Activated CD4-positive, alpha-beta memory T cell treated with anti-CD3 and anti-CD28 coated beads, Interleukin-2, amount 10 ng/mL, durations not matched to agents 7 days and 5 days (primary cell): ENCODE measurements at regions of chr6 and their contacts with region 1.

Region 1: GRCh38 chr6:136792410-136793262 is at the start of gene MAP3K5:
- DNase-seq: peak; percentile 95
- H3K4me3 Mint-ChIP-seq: peak within 1 kb of the TSS; percentile 93
- H3K27ac Mint-ChIP-seq: peak within 1 kb of the TSS; percentile 91
- H3K4me1 Mint-ChIP-seq: peaks cover 31% of the 10 kb centered on the region
- H3K27me3 Mint-ChIP-seq: peaks cover 3% of the 10 kb centered on the region
- total RNA-seq, gene MAP3K5: 25.4 to 25.9 TPM

Region 2: DNA sequence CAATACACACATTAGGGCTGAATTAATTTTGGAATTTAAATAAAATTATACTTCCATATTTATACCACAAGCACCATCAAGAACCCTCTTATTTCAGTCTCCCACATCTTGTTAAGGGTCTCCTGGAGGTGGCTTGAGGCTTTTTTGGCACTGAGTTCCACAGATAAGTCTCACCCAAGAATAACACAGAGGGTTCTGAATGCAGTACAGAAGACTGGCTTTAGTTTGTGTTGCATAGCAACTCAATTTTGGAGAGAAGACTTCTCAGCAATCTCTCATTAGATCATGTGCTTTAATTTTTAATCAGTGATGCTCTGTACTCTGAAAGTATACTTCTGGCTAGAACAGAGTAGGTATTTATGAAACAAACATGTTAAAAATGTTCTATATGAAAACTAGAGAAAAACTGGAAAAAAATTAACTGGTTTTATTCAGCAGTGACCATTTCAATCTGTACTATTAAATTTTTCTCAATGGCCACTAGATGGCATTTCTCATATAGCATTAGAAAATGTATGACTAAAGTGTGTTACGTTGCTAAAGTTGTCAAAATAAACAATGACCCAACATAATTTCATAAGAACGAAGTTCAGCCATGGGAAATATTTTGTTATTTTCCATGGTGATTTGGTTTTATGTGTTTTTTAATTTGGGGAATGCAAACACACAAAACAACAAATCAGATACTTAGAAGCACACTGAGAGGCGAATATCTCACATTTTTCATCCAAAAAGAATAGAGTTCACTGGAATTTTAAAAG is 209.7 kb before region 1 on chr6:
- CTCF ChIA-PET with region 1: interaction called, 21 read pairs
- POLR2A ChIA-PET with region 1: interaction called, 7 read pairs
- DNase-seq: no peak
- H3K4me3 Mint-ChIP-seq: no peak overlapping the region
- H3K27ac Mint-ChIP-seq: no peak overlapping the region
- H3K4me1 Mint-ChIP-seq: peaks cover 6% of the 10 kb centered on the region
- H3K27me3 Mint-ChIP-seq: no peaks in the 10 kb centered on the region

Region 3: DNA sequence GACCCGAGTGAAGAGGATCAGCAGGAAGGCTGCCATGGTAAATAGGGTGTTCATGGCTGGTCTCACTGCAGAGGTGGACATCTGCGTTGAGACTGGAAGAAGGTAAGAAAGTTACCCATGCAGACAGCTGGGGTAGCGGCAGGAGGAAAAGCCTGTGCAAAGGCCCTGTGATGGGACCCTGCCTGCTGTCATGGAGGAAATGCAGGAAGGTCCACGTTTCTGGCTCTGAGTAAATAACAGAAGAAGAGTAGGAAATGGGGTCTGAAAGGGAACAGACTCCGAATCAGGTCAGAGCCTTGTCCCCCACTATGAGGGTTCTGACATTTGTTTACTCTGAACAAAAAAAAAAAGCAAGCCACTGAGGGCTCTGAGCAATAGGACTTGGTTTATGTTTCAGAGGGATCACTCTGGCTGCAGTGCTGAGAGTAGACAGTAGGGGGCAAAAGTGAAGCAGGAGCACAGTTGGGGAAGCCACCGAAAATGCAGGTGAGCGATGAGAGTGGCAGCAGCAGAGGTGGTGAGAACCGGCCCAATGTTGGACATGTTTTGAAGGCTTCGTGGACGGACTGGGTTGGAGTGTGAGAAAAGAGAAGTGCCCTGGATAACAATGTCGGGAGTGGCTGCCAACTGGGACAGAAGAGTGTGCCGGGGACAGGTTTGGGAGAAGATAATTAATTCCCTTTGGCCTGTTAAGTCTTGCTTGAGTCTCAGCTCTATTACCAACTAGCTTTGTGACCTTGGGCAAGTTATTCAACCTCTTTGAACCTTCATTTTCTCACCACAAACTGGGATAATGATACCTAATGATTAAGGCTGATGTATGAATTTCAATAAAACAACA is 184.5 kb before region 1 on chr6:
- CTCF ChIA-PET with region 1: interaction called, 28 read pairs
- POLR2A ChIA-PET with region 1: interaction called, 9 read pairs
- DNase-seq: peak; percentile 85
- H3K4me3 Mint-ChIP-seq: no peak overlapping the region
- H3K27ac Mint-ChIP-seq: no peak overlapping the region
- H3K4me1 Mint-ChIP-seq: peaks cover 30% of the 10 kb centered on the region
- H3K27me3 Mint-ChIP-seq: no peaks in the 10 kb centered on the region

Region 4: DNA sequence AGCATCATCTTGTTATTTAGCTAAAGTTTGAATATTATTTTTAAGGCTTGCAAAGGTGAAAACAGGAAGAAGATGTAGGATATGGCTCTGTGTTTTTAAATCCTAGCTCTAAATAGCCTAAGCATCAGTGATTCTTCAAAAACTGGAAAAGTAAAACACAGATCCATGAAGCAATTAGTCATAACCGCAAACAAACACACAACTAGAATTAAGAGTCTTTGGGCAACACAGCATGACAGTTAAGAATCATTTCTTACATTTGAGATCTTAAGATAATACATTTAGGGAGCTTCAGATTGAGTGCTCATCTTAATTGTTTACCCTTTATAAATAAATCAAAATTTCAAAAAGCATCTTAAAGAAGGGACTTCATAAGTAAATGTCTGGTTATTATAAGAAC is 126.6 kb before region 1 on chr6:
- CTCF ChIA-PET with region 1: interaction called, 21 read pairs
- POLR2A ChIA-PET with region 1: interaction called, 4 read pairs
- DNase-seq: no peak
- H3K4me3 Mint-ChIP-seq: no peak overlapping the region
- H3K27ac Mint-ChIP-seq: no peak overlapping the region
- H3K4me1 Mint-ChIP-seq: no peaks in the 10 kb centered on the region
- H3K27me3 Mint-ChIP-seq: no peaks in the 10 kb centered on the region

Region 5: DNA sequence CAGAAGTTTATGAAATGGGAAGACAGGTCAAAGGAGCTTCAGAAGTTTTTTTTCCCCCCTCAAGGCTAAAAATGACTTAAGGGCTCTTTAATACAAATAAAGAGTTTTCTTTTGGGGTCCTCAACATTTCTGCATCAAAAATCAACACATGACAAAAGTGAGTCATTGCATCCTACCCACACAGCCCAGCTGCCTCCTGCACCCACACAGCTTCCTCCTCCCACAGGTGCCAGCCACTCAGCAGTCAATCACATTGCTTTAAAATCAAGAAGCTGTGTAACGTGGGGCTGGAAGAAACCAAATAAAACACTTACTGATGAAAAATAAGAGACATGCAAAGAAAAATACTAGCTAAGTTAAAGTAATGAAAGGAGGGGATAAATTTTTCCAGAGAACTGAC is 68.9 kb before region 1 on chr6:
- CTCF ChIA-PET with region 1: interaction called, 28 read pairs
- POLR2A ChIA-PET with region 1: interaction called, 28 read pairs
- DNase-seq: peak; percentile 56
- H3K4me3 Mint-ChIP-seq: no peak overlapping the region
- H3K27ac Mint-ChIP-seq: no peak overlapping the region
- H3K4me1 Mint-ChIP-seq: peaks cover 43% of the 10 kb centered on the region
- H3K27me3 Mint-ChIP-seq: no peaks in the 10 kb centered on the region

Region 6: DNA sequence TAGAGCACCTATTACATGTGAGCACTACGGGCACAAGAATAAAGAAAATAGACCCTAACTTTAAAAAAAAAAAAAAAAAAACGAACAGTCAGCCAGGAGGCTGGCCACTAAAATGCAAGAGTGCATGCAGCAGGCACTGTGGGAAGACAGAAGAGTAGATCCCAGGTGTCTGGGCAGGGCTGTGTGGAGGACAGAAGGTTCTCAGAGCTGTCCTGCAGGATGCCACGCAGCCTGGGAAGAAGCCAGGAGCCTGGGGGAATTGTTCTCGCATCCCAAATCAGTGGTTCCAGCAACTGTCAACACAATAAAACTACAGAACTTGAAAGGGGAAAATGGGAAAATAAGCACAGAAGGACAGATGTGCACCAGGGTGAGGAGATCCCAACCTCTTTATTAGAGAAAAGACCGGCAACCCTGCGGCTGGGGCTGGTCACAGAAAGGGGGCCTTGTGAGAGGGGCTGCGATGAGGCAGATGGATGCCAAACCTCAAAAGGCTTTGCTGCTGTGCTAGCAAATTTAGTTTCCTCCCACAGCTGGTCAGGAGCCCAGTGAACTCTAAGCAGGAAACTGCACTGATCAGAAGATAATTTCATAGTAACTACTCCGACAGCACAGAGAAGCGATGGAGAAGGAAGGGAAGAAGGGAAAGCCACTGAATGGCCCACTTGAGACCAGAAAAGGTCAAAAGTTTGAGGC is 31.3 kb before region 1 on chr6:
- CTCF ChIA-PET with region 1: interaction called, 80 read pairs
- POLR2A ChIA-PET with region 1: interaction called, 68 read pairs
- DNase-seq: peak; percentile 34
- H3K4me3 Mint-ChIP-seq: peak overlapping the region; percentile 38
- H3K27ac Mint-ChIP-seq: peak overlapping the region; percentile 21
- H3K4me1 Mint-ChIP-seq: peaks cover 66% of the 10 kb centered on the region
- H3K27me3 Mint-ChIP-seq: no peaks in the 10 kb centered on the region

Region 7: DNA sequence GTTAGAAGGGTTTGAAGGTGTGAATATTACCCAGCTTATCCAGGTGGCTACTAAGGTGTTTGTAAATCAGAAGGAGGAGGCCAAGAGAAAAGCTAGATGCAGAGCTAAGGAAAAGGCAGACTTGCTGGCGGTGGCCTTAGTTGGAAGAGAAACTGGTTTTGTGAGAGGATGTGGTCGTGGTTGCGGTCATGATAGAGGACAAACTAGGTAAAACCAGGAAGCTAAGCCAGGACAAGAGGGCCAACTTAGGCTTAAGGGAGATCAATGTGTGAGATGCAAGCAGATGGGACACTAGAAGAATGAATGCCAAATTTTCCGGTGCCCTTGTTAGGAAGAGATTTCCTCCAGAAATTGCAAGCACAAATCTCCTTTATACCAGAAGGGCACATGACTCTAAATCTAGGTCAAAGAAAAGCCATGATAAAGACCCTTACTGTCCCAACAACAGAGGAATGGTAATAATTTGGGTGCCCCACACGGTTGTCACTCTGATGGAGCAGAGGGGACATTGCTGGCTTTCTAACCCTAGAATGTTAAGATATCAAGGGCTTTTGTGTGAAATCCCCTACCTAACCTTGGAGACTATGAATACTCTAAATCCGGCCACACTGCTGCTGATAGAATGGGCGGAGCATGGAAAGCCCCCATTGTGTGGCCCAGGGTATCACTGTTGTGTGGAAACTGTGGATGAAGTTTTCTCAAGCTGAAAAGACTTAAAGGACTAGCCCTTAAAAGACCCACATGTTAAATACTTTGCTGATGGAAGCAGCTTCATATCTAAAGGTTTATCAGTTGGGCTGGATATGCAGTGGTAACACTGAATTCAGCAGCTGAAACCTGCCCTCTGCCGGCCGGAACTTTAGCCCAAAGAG is 373.0 kb after region 1 on chr6:
- CTCF ChIA-PET with region 1: no interaction called
- POLR2A ChIA-PET with region 1: no interaction called
- DNase-seq: peak; percentile 76
- H3K4me3 Mint-ChIP-seq: peak overlapping the region; percentile 23
- H3K27ac Mint-ChIP-seq: peak overlapping the region; percentile 70
- H3K4me1 Mint-ChIP-seq: peaks cover 30% of the 10 kb centered on the region
- H3K27me3 Mint-ChIP-seq: peaks cover 20% of the 10 kb centered on the region

Region 8: DNA sequence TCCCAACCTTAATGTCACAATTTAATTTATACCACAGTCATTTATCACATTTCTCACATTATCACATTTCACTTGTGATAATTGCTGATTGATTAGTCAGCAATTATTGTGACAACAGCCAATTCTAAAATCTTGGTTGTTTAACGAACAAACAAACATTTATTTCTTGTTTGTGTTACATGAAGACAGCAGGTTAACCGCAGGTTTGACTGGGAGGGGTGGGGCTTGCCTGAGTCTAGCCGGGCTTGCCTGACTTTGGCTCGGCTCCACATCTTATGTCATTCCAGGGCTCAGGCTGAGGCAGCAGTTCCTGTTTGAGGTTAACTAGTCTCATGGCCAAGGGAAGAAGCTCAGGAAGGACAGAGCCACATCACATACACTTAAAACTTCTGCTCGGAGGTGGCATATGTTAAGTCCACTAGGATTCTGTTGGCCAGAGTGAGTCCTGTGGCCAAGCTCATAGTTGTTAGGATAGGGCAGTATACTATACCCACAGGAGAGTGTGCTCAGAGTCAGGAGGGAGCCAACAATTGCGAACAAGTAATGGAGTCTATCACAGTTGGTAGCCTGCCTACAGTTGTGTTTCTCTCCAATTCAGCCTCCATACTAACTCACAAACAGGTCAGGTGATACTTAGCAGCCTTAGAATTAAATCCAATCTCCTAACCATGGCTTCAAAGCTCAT is 516.6 kb after region 1 on chr6:
- CTCF ChIA-PET with region 1: no interaction called
- POLR2A ChIA-PET with region 1: no interaction called
- DNase-seq: no peak
- H3K4me3 Mint-ChIP-seq: no peak overlapping the region
- H3K27ac Mint-ChIP-seq: no peak overlapping the region
- H3K4me1 Mint-ChIP-seq: peaks cover 7% of the 10 kb centered on the region
- H3K27me3 Mint-ChIP-seq: peaks cover 8% of the 10 kb centered on the region